ENCODE measurements at regions of chr5 and their contacts with region 1.

Region 1: GRCh38 chr5:26329562-26330189 is 708.7 kb downstream of the CDH9 start:
- DNase-seq: peak; percentile 59
- H3K4me3 Mint-ChIP-seq: no peak overlapping the region
- H3K27ac Mint-ChIP-seq: no peak overlapping the region
- H3K4me1 Mint-ChIP-seq: no peaks in the 10 kb centered on the region
- H3K27me3 Mint-ChIP-seq: no peaks in the 10 kb centered on the region
- CTCF ChIP-seq: peak; percentile 51

Region 2: DNA sequence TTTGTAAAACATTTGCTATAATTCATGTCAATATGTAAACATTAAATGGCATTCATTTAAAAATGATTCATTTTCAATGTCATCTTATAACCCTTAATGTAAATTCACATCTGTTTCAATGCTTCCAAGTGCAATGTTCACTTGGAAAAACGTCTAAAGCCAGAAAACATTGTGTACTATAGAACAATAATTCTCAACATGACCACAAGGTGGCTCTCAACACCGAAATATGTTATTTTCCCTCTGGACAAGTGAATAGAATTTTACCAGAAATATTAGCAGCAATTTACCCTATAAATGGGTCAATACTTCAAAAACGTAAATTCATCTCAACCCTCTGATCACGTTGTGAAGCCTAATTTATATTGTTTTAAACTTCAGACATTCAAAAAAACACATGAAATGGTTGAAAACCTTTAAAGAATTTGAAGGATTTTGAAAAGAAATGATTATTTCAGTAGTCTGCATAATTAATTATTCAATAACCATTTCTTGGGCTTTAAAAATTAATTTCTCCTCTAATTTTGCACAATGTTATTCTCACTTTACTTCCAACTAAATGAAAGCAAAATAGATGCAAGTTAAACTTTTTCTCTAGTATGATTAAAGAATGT is 1695.9 kb before region 1 on chr5:
- CTCF ChIA-PET with region 1: no interaction called
- POLR2A ChIA-PET with region 1: no interaction called
- intact Hi-C with region 1: loop called (anchors 5 kb)
- DNase-seq: peak; percentile 66
- H3K4me3 Mint-ChIP-seq: no peak overlapping the region
- H3K27ac Mint-ChIP-seq: no peak overlapping the region
- H3K4me1 Mint-ChIP-seq: no peaks in the 10 kb centered on the region
- H3K27me3 Mint-ChIP-seq: no peaks in the 10 kb centered on the region
- CTCF ChIP-seq: peak; percentile 57

Region 3: GRCh38 chr5:24642022-24642421 is 1687.7 kb before region 1 on chr5:
- CTCF ChIA-PET with region 1: no interaction called
- POLR2A ChIA-PET with region 1: no interaction called
- intact Hi-C with region 1: loop called (anchors 5 kb)
- DNase-seq: peak; percentile 54
- H3K4me3 Mint-ChIP-seq: no peak overlapping the region
- H3K27ac Mint-ChIP-seq: no peak overlapping the region
- H3K4me1 Mint-ChIP-seq: peaks cover 26% of the 10 kb centered on the region
- H3K27me3 Mint-ChIP-seq: no peaks in the 10 kb centered on the region
- CTCF ChIP-seq: peak; percentile 42

Region 4: DNA sequence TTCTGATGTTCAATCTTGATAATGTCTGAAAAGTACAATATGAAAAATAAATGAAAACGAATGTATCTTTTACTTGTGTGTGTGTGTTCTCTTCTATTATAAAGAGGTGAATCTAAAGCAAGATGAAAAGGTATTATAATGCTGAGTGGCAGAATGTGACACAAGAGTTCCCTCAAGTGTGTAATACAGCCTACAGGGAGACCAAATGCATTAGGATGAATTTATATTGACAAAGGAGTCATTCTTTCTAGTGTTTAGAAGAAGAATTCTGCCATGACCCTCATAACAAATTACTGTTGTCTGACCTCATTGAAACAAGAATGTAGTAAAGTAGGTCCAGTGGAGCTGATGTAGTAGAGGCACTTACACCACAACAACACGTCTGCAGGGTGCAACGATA is 565.9 kb before region 1 on chr5:
- CTCF ChIA-PET with region 1: interaction called, 6 read pairs
- POLR2A ChIA-PET with region 1: no interaction called
- intact Hi-C with region 1: loop called (anchors 1 kb)
- DNase-seq: no peak
- H3K4me3 Mint-ChIP-seq: no peak overlapping the region
- H3K27ac Mint-ChIP-seq: no peak overlapping the region
- H3K4me1 Mint-ChIP-seq: no peaks in the 10 kb centered on the region
- H3K27me3 Mint-ChIP-seq: no peaks in the 10 kb centered on the region
- CTCF ChIP-seq: no peak

Region 5: DNA sequence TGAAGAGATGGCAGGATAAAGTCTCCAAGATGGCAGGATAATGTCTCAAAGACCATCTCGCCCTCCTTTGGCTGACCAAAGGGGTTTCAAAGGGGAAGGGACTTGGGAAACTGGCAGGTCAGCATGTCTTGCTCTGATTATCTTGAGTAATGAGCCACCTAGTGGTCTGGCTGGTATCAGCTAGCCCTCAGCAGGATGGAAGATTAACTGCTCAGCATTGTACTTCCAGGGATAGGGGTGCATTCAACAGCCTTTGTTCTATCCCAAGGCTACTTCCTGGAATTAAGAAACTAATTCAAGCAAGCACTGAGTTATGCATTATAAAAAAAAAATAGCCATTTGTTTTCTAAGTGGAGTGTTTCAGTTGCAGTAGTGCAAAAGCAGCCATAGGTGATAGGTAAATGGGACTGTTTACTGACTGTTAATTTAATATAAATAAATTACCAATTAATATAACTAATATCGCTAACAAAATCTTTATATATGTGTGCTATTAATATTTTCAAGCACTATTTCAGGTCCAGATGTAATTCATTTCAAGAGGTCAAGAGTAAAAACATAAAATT is 153.2 kb after region 1 on chr5:
- CTCF ChIA-PET with region 1: interaction called, 3 read pairs
- POLR2A ChIA-PET with region 1: no interaction called
- intact Hi-C with region 1: loop called (anchors 1 kb)
- DNase-seq: peak; percentile 64
- H3K4me3 Mint-ChIP-seq: peak overlapping the region; percentile 29
- H3K27ac Mint-ChIP-seq: no peak overlapping the region
- H3K4me1 Mint-ChIP-seq: no peaks in the 10 kb centered on the region
- H3K27me3 Mint-ChIP-seq: no peaks in the 10 kb centered on the region
- CTCF ChIP-seq: peak; percentile 58

Region 6: GRCh38 chr5:26700759-26701384 is 371.2 kb after region 1 on chr5:
- CTCF ChIA-PET with region 1: no interaction called
- POLR2A ChIA-PET with region 1: no interaction called
- intact Hi-C with region 1: loop called (anchors 5 kb)
- DNase-seq: peak; percentile 75
- H3K4me3 Mint-ChIP-seq: no peak overlapping the region
- H3K27ac Mint-ChIP-seq: no peak overlapping the region
- H3K4me1 Mint-ChIP-seq: no peaks in the 10 kb centered on the region
- H3K27me3 Mint-ChIP-seq: no peaks in the 10 kb centered on the region
- CTCF ChIP-seq: peak; percentile 61